ENCODE measurements at regions of chr2 and their contacts with region 1.

Region 1: GRCh38 chr2:190313880-190314279 is 5.7 kb downstream of the HIBCH start:
- DNase-seq: no peak
- H3K4me3 ChIP-seq: no peak overlapping the region
- H3K4me3 Mint-ChIP-seq: no peak overlapping the region
- H3K27ac Mint-ChIP-seq: no peak overlapping the region
- H3K4me1 ChIP-seq: peaks cover 12% of the 10 kb centered on the region; the same call in 1 of the 2 replicates
- H3K4me1 Mint-ChIP-seq: peaks cover 7% of the 10 kb centered on the region
- H3K27me3 ChIP-seq: no peaks in the 10 kb centered on the region
- H3K27me3 Mint-ChIP-seq: no peaks in the 10 kb centered on the region
- CTCF ChIP-seq: no peak

Region 2: GRCh38 chr2:190202604-190203003 is 111.3 kb before region 1 on chr2:
- CTCF ChIA-PET with region 1: no interaction called
- POLR2A ChIA-PET with region 1: no interaction called
- intact Hi-C with region 1: loop called (anchors 1 kb)
- DNase-seq: peak in 1 of 2 experiments; percentile 21
- H3K4me3 ChIP-seq: no peak overlapping the region
- H3K4me3 Mint-ChIP-seq: no peak overlapping the region
- H3K27ac Mint-ChIP-seq: peak overlapping the region; percentile 42
- H3K4me1 ChIP-seq: peaks cover 26% of the 10 kb centered on the region
- H3K4me1 Mint-ChIP-seq: peaks cover 26% of the 10 kb centered on the region
- H3K27me3 ChIP-seq: no peaks in the 10 kb centered on the region
- H3K27me3 Mint-ChIP-seq: no peaks in the 10 kb centered on the region
- CTCF ChIP-seq: no peak

Measured in Caco-2 (cell line).